ENCODE measurements at regions of chr12 and their contacts with region 1.

Region 1: DNA sequence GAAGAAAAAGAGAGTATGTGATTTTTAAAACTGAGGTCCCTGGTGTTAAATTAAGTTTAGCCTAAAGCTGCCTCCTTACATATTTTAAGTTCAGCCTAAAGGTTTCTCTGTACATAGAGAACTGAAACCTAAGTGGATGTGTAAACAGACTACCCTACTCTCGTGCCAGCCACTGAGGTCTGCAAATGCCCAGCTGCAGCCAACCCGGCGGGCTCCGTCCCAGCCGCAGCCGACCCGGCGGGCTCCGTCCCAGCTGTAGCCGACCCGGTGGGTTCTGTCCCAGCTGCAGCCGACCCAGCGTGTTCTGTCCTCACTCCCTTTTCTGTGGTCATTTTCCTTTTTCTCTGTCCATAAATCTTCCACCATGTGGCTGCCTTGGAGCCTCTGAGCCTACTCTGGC is 97.2 kb upstream of the SFSWAP start:
- DNase-seq: no peak
- ATAC-seq: peak; percentile 30
- H3K4me3 ChIP-seq: no peak overlapping the region
- H3K27ac ChIP-seq: no peak overlapping the region
- H3K4me1 ChIP-seq: peaks cover 6 to 7% of the 10 kb centered on the region in 2 donors
- H3K27me3 ChIP-seq: peaks cover 0 to 50% of the 10 kb centered on the region in 2 donors
- CTCF ChIP-seq: no peak

Region 2: DNA sequence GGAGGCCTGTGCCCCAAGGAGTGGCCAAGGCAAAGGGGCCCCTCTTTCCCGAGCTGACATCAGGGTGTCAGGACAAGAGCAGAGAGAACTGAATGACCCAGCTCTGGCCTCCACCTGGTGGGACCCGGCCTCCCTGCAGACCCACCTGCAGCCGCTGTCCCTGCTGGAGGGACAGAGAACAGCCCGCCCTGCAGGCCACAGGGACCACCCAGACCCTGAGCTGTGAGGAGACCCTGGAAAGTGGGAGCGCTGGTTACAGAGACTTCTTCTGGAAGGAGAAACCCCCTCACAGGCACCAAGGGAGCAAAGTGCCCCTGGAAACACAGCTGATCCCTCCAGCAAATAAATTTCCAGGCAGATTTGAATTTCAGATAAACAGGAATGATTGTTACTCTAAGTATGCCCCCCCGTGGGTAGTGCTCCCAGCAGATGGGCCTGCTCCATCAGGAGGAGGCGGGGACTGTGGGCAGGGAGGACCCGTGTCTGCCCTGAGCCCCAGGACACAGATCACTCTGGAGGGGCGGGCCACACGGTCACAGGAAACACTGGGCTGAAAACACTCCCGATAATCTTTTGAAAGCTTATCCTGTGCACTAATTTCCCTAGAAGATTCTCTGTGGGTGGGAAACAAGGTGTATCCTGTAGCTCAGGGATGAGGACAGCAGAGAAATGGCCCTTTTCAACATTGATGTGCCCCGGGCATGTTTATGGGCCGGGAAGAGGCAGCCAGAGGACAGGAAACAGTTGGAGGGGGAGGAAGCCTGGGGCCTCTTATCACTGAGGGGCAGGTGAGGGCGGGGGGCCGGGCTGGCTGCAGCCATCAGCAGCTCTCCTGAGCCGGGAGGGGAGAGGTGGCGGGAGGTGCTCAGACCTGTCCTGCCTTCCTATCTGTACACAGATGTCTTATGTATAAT is 384.0 kb before region 1 on chr12:
- intact Hi-C with region 1: no loop called
- DNase-seq: peak in 2 of 4 donors; percentile 49 to 50
- ATAC-seq: peak; percentile 47
- H3K4me3 ChIP-seq: no peak overlapping the region
- H3K27ac ChIP-seq: no peak overlapping the region
- H3K4me1 ChIP-seq: peaks cover 0 to 12% of the 10 kb centered on the region in 2 donors
- H3K27me3 ChIP-seq: peaks cover 5 to 25% of the 10 kb centered on the region in 2 donors
- CTCF ChIP-seq: no peak

Region 3: DNA sequence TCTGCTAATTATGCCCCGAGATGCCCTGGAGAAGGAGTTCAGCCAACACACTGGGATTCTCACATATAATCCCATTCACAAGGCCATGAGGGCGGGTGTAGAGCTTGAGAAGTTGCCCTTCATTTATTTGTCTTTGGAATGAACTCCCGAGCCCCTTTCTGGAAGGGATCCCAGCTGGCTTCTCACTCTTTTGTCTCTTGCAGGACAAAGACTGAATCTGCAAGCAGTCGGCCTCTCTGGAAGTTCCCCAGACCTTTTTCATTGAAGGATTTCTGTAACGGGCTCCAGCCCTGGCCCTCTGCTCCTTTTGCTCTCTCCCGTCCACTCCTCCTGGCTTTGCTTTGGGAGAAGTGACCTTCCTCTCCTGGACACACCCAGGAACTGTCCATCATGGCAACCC is 66.1 kb before region 1 on chr12:
- intact Hi-C with region 1: loop called in 1 of 2 experiments (anchors 2 kb)
- DNase-seq: peak in 1 of 4 donors; percentile 21
- ATAC-seq: no peak
- H3K4me3 ChIP-seq: no peak overlapping the region
- H3K27ac ChIP-seq: no peak overlapping the region
- H3K4me1 ChIP-seq: no peaks in the 10 kb centered on the region
- H3K27me3 ChIP-seq: peaks cover 0 to 23% of the 10 kb centered on the region in 2 donors
- CTCF ChIP-seq: no peak

Region 4: GRCh38 chr12:131783915-131784541 is 170.3 kb after region 1 on chr12:
- intact Hi-C with region 1: no loop called
- DNase-seq: no peak
- ATAC-seq: no peak
- H3K4me3 ChIP-seq: no peak overlapping the region
- H3K27ac ChIP-seq: no peak overlapping the region
- H3K4me1 ChIP-seq: no peaks in the 10 kb centered on the region
- H3K27me3 ChIP-seq: no peaks in the 10 kb centered on the region
- CTCF ChIP-seq: no peak

Region 5: GRCh38 chr12:131830335-131830913 is 216.7 kb after region 1 on chr12:
- intact Hi-C with region 1: no loop called
- DNase-seq: peak in 3 of 4 donors; percentile 77 to 95 (median 81)
- ATAC-seq: peak; percentile 92
- H3K4me3 ChIP-seq: peak overlapping the region; percentile 25 to 57
- H3K27ac ChIP-seq: peak overlapping the region in 1 of 2 donors; percentile 59
- H3K4me1 ChIP-seq: peaks cover 23 to 48% of the 10 kb centered on the region in 2 donors
- H3K27me3 ChIP-seq: peaks cover 41 to 94% of the 10 kb centered on the region in 2 donors
- CTCF ChIP-seq: peak; percentile 51 to 61